Transverse colon (tissue), 4 donors: ENCODE measurements at regions of chrX and their contacts with region 1.

Region 1: DNA sequence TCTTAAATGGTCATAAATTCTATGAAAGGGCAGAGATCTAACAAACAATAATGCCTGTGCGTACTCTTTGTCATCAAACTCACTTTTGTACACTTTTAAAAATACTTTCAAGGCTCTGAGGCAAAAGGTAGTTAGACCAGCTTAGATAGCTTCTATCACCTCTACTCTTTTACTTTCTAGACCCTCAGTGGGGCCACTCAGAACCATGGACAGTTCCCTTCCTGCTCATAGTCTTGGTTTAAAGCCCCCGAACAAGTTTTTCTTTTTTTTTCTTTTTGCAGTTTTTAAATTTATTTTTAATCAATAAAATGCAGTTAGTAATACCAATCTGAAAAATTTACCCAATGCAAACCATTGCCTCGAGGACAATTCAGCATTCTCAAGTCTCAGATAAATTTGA is 460.5 kb upstream of the CNKSR2 start:
- DNase-seq: no peak
- H3K4me3 ChIP-seq: no peak overlapping the region
- H3K27ac ChIP-seq: no peak overlapping the region
- H3K4me1 ChIP-seq: no peaks in the 10 kb centered on the region
- H3K27me3 ChIP-seq: no peaks in the 10 kb centered on the region
- CTCF ChIP-seq: no peak
- EP300 ChIP-seq: no peak
- POLR2A ChIP-seq: no peak

Region 2: GRCh38 chrX:20802041-20802440 is 111.7 kb before region 1 on chrX:
- in situ Hi-C with region 1: loop called in 1 of 4 experiments (anchors 25 kb)
- intact Hi-C with region 1: no loop called
- DNase-seq: no peak
- H3K4me3 ChIP-seq: no peak overlapping the region
- H3K27ac ChIP-seq: no peak overlapping the region
- H3K4me1 ChIP-seq: no peaks in the 10 kb centered on the region
- H3K27me3 ChIP-seq: no peaks in the 10 kb centered on the region
- CTCF ChIP-seq: no peak
- EP300 ChIP-seq: no peak
- POLR2A ChIP-seq: no peak

Region 3: DNA sequence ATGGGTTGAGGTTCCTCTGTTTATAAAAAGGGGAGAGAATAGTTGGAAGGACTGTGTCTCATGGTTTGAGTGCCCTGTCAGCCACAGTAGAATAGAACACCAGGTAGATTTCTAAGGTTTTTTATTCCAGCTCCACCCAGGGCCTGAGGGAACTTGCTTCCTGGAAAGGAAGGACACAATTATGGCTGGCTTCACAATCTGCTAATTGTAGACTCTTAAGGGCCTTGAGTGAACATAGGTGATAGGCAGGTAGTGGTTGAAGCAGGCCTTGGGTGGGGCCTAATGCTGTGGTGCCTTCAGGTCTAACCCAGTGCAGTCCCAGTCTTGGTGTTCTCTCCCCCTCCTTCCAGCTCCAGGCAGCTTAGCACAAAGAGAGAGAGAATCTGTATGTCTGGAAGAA is 47.9 kb after region 1 on chrX:
- in situ Hi-C with region 1: no loop called
- intact Hi-C with region 1: no loop called
- DNase-seq: no peak
- H3K4me3 ChIP-seq: no peak overlapping the region
- H3K27ac ChIP-seq: no peak overlapping the region
- H3K4me1 ChIP-seq: no peaks in the 10 kb centered on the region
- H3K27me3 ChIP-seq: no peaks in the 10 kb centered on the region
- CTCF ChIP-seq: no peak
- EP300 ChIP-seq: no peak
- POLR2A ChIP-seq: no peak